MCF 10A (cell line): ENCODE measurements at regions of chr11 and their contacts with region 1.

Region 1: DNA sequence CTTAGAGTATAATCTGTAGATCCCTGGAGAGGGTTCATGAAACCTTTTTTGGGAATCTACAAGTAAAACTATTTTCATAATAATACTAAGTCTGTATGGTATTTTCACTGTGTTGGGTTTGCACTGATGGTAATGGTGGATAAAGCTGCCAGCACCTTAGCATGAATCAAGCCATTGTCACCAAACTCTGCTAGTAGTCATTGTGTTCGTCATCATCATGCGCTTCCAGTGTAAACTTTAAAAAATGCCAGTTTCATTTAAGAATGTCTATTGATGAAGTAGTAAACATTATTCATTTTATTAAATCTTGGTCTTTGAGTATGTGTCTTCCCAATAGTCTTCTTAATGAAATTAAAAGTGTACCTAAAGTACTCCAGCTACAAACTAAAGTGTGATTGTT is 15.0 kb downstream of the ALKBH3 start:
- DNase-seq: no peak
- H3K4me3 Mint-ChIP-seq: no peak overlapping the region
- H3K27ac Mint-ChIP-seq: no peak overlapping the region
- H3K4me1 Mint-ChIP-seq: no peaks in the 10 kb centered on the region
- H3K27me3 Mint-ChIP-seq: no peaks in the 10 kb centered on the region
- CTCF ChIP-seq: no peak

Region 2: DNA sequence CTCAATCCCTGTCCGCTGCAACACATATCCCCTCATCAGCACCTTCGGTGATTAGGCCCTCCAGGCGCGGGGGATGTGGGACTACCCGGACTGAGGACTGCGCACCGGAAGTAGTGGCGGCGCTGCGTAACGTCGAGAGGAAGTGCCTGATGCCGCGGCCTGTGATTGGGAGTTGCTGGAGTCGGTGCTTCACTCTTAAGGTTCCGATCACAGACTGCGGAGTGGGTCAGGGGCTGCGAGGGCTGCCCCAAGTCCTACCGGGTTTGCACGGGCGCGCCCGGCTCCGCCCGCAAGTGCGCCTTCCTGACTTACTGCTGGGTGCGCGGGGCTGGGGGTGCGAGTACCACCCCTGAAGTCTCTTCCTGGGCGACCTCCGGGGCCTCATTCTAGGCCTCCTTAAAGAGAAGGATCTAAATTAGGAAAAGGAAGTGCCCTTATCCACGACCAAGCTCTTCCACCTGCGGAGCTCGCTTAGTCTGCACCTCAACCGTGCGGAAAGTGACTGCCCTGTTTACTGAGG is 14.9 kb before region 1 on chr11 and contains the start of gene ALKBH3:
- CTCF ChIA-PET with region 1: interaction called, 23 read pairs
- POLR2A ChIA-PET with region 1: no interaction called
- intact Hi-C with region 1: no loop called
- DNase-seq: peak; percentile 91
- H3K4me3 Mint-ChIP-seq: peak within 1 kb of the TSS; percentile 91
- H3K27ac Mint-ChIP-seq: peak within 1 kb of the TSS; percentile 87
- H3K4me1 Mint-ChIP-seq: peaks cover 6% of the 10 kb centered on the region
- H3K27me3 Mint-ChIP-seq: peaks cover 13% of the 10 kb centered on the region
- CTCF ChIP-seq: no peak
- total RNA-seq, gene ALKBH3: 76.2 and 88.0 TPM in 2 replicates

Region 3: GRCh38 chr11:43905813-43906241 is 10.2 kb after region 1 on chr11:
- CTCF ChIA-PET with region 1: interaction called, 39 read pairs
- POLR2A ChIA-PET with region 1: no interaction called
- intact Hi-C with region 1: no loop called
- DNase-seq: no peak
- H3K4me3 Mint-ChIP-seq: no peak overlapping the region
- H3K27ac Mint-ChIP-seq: no peak overlapping the region
- H3K4me1 Mint-ChIP-seq: peaks cover 13% of the 10 kb centered on the region
- H3K27me3 Mint-ChIP-seq: no peaks in the 10 kb centered on the region
- CTCF ChIP-seq: no peak

Region 4: GRCh38 chr11:43920598-43921419 is 25.2 kb after region 1 on chr11:
- CTCF ChIA-PET with region 1: interaction called, 27 read pairs
- POLR2A ChIA-PET with region 1: interaction called, 4 read pairs
- intact Hi-C with region 1: no loop called
- DNase-seq: peak; percentile 100
- H3K4me3 Mint-ChIP-seq: peak overlapping the region; percentile 29
- H3K27ac Mint-ChIP-seq: peak overlapping the region; percentile 95
- H3K4me1 Mint-ChIP-seq: peaks cover 23% of the 10 kb centered on the region
- H3K27me3 Mint-ChIP-seq: no peaks in the 10 kb centered on the region
- CTCF ChIP-seq: no peak

Region 5: DNA sequence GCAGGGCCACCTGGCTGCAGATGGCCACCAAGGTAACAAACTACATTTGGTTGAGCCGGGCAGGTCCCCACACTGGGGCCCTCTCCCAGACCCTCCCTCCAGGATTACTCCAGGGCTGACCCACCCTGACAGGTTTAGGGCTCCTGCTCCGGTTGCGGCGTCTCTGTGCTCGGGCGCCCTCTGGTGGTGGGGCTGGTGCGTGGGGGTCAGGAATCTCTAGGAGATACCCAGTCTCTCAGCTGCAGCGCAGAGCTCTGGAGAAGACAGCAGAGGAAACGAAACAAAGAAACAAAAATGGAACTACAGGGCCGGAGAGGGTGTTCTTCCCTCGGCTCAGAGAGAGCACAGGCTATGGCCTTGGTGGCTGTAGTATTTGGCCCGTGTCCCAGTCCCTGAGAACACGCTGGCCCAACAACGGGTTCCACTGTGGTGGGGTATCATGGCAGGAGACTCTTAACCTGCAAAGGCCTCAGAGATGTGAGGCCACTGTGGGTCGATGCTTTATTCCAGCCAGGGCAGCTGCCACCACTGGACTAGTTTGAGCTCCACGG is 49.2 kb after region 1 on chr11:
- CTCF ChIA-PET with region 1: interaction called, 51 read pairs
- POLR2A ChIA-PET with region 1: interaction called, 3 read pairs
- intact Hi-C with region 1: loop called (anchors 1 kb)
- DNase-seq: peak; percentile 59
- H3K4me3 Mint-ChIP-seq: peak overlapping the region; percentile 80
- H3K27ac Mint-ChIP-seq: no peak overlapping the region
- H3K4me1 Mint-ChIP-seq: peaks cover 12% of the 10 kb centered on the region
- H3K27me3 Mint-ChIP-seq: peaks cover 58% of the 10 kb centered on the region
- CTCF ChIP-seq: peak; percentile 92

Region 6: DNA sequence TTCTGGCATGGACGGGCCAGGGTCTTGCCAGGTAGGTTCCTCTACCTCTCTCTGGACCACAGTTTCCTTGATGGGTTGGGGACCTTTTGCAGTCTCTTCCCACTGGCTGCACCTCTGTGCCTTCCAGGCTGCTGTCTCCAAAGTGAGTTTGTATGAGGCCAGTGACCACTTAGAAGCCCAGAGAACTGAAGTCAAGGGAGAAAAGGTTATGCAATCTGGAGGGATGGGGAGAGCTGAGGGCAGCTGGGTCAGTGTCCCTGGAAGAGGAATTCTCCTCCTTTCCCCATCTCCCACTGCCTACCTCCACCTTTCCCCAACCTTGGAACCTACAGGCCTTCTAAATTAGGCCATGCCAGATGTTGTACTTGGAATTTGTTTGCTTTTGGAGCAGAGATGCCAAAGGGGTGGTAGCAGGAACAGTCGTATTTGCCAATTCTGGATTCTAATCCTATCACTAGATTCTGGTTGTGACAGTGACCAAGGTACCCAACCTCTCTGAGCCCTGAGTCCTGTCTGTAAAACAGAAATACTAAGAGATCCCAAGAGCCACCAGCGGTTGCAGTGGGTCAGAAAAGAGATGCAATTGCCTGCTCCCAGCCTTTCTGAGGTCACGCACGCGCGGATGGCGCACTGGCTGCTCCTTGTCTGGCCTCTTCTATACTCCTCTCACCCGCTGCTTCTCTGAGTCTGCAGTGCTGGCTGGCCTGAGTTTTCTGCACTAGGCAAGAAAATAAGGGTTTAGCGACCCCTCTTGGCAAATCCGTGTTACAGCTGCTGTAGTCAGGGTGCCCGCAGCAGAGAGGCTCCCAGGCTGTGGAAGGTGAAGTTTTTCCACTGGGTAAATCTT is 141.4 kb after region 1 on chr11:
- CTCF ChIA-PET with region 1: interaction called, 60 read pairs
- POLR2A ChIA-PET with region 1: no interaction called
- intact Hi-C with region 1: loop called (anchors 1 kb)
- DNase-seq: peak; percentile 67
- H3K4me3 Mint-ChIP-seq: no peak overlapping the region
- H3K27ac Mint-ChIP-seq: no peak overlapping the region
- H3K4me1 Mint-ChIP-seq: no peaks in the 10 kb centered on the region
- H3K27me3 Mint-ChIP-seq: peaks cover 14% of the 10 kb centered on the region
- CTCF ChIP-seq: peak; percentile 64